ENCODE measurements at regions of chr3 and their contacts with region 1.

Region 1: DNA sequence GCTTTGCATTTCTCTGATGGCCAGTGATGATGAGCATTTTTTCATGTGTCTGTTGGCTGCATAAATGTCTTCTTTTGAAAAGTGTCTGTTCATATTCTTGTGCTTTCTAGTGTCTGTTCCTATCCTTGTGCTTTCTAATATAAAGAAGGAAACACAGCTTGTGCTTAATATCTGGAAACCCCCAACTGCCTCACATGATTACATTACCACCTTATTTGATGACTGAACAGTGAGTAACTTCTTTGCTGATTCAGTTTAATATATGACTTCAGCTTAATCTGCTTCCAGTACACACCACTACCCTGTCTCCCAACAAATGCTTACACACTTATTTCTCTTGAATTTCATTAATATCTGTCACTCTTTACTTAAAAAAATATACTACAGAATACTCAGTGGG is 835.1 kb downstream of the EDEM1 start:
- DNase-seq: no peak
- H3K4me3 ChIP-seq: no peak overlapping the region
- H3K27ac ChIP-seq: no peak overlapping the region
- H3K4me1 ChIP-seq: no peaks in the 10 kb centered on the region
- H3K27me3 ChIP-seq: no peaks in the 10 kb centered on the region
- CTCF ChIP-seq: no peak

Region 2: GRCh38 chr3:5974630-5975322 is 47.8 kb before region 1 on chr3:
- CTCF ChIA-PET with region 1: no interaction called
- dilution Hi-C with region 1: loop called (anchors 5 kb)
- in situ Hi-C with region 1: no loop called
- intact Hi-C with region 1: no loop called
- DNase-seq: no peak
- H3K4me3 ChIP-seq: no peak overlapping the region
- H3K27ac ChIP-seq: no peak overlapping the region
- H3K4me1 ChIP-seq: no peaks in the 10 kb centered on the region
- H3K27me3 ChIP-seq: no peaks in the 10 kb centered on the region
- CTCF ChIP-seq: no peak

Region 3: DNA sequence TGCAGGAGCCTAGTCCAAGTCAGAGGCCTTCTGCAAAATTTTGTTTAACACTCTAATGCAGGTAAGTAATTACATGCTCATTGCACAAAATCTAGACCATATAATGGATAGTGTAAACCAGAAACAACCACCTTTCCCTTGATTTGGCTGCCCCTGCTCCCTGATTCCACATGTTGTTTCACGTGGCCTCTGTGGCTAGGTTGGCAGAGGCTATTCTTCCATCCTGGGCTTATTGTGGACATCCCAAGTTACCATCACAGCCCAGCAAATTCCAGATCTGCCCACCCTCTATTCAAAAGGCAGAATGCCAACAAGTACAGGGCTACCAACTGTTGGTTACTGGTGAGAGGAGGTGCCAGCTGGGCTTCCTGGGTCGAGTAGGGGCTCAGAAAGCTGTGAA is 43.8 kb after region 1 on chr3:
- CTCF ChIA-PET with region 1: no interaction called
- dilution Hi-C with region 1: no loop called
- in situ Hi-C with region 1: no loop called
- intact Hi-C with region 1: no loop called
- DNase-seq: no peak
- H3K4me3 ChIP-seq: no peak overlapping the region
- H3K27ac ChIP-seq: no peak overlapping the region
- H3K4me1 ChIP-seq: no peaks in the 10 kb centered on the region
- H3K27me3 ChIP-seq: no peaks in the 10 kb centered on the region
- CTCF ChIP-seq: no peak

Region 4: GRCh38 chr3:6132684-6133432 is 110.2 kb after region 1 on chr3:
- CTCF ChIA-PET with region 1: no interaction called
- dilution Hi-C with region 1: no loop called
- in situ Hi-C with region 1: no loop called
- intact Hi-C with region 1: no loop called
- DNase-seq: no peak
- H3K4me3 ChIP-seq: no peak overlapping the region
- H3K27ac ChIP-seq: no peak overlapping the region
- H3K4me1 ChIP-seq: no peaks in the 10 kb centered on the region
- H3K27me3 ChIP-seq: no peaks in the 10 kb centered on the region
- CTCF ChIP-seq: no peak

Measured in mammary epithelial cell (primary cell).